Activated CD4-positive, alpha-beta memory T cell treated with anti-CD3 and anti-CD28 coated beads for 36 hours (primary cell): ENCODE measurements at regions of chr1 and their contacts with region 1.

Region 1: GRCh38 chr1:52141513-52142219 is at the start of gene ZFYVE9:
- DNase-seq: peak; percentile 75
- H3K4me3 Mint-ChIP-seq: peak within 1 kb of the TSS; percentile 80
- H3K27ac Mint-ChIP-seq: no peak within 1 kb of the TSS
- H3K4me1 Mint-ChIP-seq: peaks cover 39% of the 10 kb centered on the region
- H3K27me3 Mint-ChIP-seq: peaks cover 3% of the 10 kb centered on the region
- total RNA-seq, gene ZFYVE9: 2.6 to 2.9 TPM

Region 2: GRCh38 chr1:52056163-52056936 is 85.3 kb before region 1 on chr1 and contains the start of gene BTF3L4:
- CTCF ChIA-PET with region 1: no interaction called
- POLR2A ChIA-PET with region 1: interaction called, 4 read pairs
- intact Hi-C with region 1: loop called (anchors 2 kb)
- DNase-seq: peak; percentile 97
- H3K4me3 Mint-ChIP-seq: peak within 1 kb of the TSS; percentile 94
- H3K27ac Mint-ChIP-seq: peak within 1 kb of the TSS; percentile 98
- H3K4me1 Mint-ChIP-seq: peaks cover 53% of the 10 kb centered on the region
- H3K27me3 Mint-ChIP-seq: no peaks in the 10 kb centered on the region
- total RNA-seq, gene BTF3L4: 32.5 to 35.2 TPM

Region 3: DNA sequence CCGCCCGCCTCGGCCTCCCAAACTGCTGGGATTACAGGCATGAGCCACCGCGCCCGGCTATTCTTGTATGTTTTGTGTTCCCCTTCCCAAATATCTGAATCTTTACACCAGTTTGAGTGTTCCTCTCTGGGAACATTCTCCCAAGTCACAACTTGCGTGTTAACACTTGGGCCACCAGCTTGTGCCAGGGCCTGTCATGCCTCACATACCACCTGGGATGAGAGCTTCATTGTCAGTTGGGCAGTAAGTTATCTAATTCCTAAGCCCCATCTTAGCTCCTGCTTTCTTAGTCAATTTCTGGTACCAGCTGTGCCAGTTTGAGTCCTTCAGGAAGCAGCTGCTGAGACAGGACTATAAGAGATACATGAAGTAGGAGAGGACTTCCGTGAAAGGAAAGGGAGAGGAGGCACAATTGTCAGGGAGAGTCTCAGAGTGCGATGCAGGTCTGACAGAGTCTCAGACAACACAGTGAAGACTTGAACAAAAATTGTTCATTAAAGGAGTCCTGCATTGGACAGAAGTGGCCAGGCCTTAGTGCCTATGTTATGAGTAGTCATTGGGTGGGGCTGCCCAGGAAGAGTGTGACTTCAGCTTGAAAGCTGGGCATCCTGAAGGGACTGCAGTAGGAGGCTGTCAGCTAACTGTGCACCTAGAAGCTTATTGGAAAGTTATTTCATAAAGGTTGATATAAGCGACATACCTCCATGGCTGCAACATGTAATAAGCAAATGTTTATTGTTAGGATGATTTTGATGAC is 17.5 kb after region 1 on chr1:
- CTCF ChIA-PET with region 1: no interaction called
- POLR2A ChIA-PET with region 1: no interaction called
- intact Hi-C with region 1: no loop called
- DNase-seq: no peak
- H3K4me3 Mint-ChIP-seq: no peak overlapping the region
- H3K27ac Mint-ChIP-seq: no peak overlapping the region
- H3K4me1 Mint-ChIP-seq: no peaks in the 10 kb centered on the region
- H3K27me3 Mint-ChIP-seq: no peaks in the 10 kb centered on the region

Region 4: GRCh38 chr1:52210044-52210443 is 68.4 kb after region 1 on chr1:
- CTCF ChIA-PET with region 1: no interaction called
- POLR2A ChIA-PET with region 1: interaction called, 5 read pairs
- intact Hi-C with region 1: loop called (anchors 1 kb)
- DNase-seq: no peak
- H3K4me3 Mint-ChIP-seq: no peak overlapping the region
- H3K27ac Mint-ChIP-seq: peak overlapping the region; percentile 20
- H3K4me1 Mint-ChIP-seq: peaks cover 17% of the 10 kb centered on the region
- H3K27me3 Mint-ChIP-seq: no peaks in the 10 kb centered on the region

Region 5: GRCh38 chr1:52296345-52296744 is 154.7 kb after region 1 on chr1:
- CTCF ChIA-PET with region 1: no interaction called
- POLR2A ChIA-PET with region 1: no interaction called
- intact Hi-C with region 1: loop called (anchors 5 kb)
- DNase-seq: no peak
- H3K4me3 Mint-ChIP-seq: no peak overlapping the region
- H3K27ac Mint-ChIP-seq: no peak overlapping the region
- H3K4me1 Mint-ChIP-seq: no peaks in the 10 kb centered on the region
- H3K27me3 Mint-ChIP-seq: no peaks in the 10 kb centered on the region

Region 6: DNA sequence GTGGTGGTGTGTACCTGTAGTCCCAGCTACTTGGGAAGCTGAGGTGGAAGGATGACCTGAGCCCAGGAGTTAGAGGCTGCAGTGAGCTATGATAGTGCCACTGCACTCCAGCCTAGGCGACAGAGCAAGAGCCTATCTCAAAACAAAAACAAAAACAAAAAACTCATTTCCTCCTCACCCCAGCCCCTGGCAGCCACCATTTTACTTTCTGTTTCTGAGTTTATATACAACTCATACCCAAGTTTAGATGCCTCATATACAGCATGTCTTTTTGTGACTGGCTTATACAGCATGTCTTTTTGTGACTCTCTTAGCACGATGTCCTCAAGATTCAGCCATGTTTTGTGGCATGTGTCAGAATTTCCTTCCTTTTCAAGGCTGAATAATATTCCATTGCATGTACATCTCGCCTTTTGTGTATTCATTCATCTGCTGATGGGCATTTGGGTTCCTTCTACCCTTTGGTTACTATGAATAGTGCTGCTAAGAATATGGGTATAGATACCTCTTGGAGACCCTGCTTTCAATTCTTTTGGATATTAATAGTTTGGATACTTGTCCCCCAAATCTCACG is 541.8 kb after region 1 on chr1:
- CTCF ChIA-PET with region 1: no interaction called
- POLR2A ChIA-PET with region 1: no interaction called
- intact Hi-C with region 1: loop called (anchors 5 kb)
- DNase-seq: no peak
- H3K4me3 Mint-ChIP-seq: no peak overlapping the region
- H3K27ac Mint-ChIP-seq: peak overlapping the region; percentile 28
- H3K4me1 Mint-ChIP-seq: peaks cover 6% of the 10 kb centered on the region
- H3K27me3 Mint-ChIP-seq: no peaks in the 10 kb centered on the region